ENCODE measurements at regions of chr17 and their contacts with region 1.

Region 1: DNA sequence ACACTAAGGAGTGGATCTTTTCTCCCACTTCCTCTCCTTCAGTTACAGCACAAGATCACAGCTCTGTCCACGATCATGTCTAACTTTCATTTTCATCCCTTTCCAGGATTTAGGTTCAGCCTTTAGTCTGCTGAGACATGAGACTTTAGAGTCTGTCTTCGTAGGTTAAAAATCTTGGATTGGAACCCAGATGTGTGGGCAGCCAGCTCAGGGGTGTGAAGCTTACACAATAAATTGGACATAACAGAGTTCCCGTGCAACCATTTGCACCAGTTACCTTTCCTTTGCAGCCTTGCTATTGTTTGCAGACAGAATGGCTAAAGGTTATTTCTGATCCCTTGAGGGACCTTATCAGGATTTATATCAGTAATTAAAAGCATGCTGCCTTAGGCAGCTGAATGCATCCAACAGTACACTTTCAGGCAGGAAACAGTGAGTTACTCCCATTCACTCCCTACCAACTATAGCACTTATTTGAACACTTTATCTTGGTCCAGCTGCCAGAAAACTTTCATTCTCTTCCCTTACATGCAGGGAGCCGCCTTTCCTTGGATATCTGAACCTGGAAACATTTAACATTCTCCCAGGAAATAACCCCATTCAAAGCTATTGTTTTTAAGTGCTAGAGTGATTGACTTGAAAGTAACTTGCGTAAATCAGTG is 87.3 kb downstream of the TMEM100 start:
- DNase-seq: no peak
- H3K4me3 ChIP-seq: no peak overlapping the region
- CTCF ChIP-seq: no peak

Region 2: DNA sequence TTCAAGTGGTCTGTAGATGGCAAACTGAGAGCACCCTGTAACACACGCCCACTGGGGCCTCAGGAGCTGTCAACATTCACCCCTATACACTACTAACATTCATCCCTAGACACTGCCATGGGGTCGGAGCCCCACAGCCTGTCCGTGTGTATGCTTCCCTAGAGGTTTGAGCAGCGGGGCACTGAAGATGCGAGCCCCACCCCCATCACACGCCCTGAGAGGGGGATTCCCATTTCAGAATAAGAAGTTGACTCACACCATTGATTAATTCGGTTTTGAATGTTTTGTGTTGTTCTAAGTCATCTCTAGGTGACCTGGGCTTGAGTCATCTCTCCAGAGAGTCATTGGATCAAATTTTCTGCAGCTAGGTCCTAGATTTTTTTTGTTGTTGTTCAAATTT is 176.4 kb before region 1 on chr17:
- CTCF ChIA-PET with region 1: no interaction called
- POLR2A ChIA-PET with region 1: no interaction called
- DNase-seq: no peak
- H3K4me3 ChIP-seq: no peak overlapping the region
- CTCF ChIP-seq: no peak

Region 3: GRCh38 chr17:55648086-55648485 is 12.7 kb after region 1 on chr17:
- CTCF ChIA-PET with region 1: interaction called, 16 read pairs
- POLR2A ChIA-PET with region 1: no interaction called
- DNase-seq: no peak
- H3K4me3 ChIP-seq: no peak overlapping the region
- CTCF ChIP-seq: no peak

Measured in AG04449 (cell line).